Activated B cell treated with CpG ODN at 0.5 μM for 24 hours (primary cell): ENCODE measurements at regions of chr9 and their contacts with region 1.

Region 1: DNA sequence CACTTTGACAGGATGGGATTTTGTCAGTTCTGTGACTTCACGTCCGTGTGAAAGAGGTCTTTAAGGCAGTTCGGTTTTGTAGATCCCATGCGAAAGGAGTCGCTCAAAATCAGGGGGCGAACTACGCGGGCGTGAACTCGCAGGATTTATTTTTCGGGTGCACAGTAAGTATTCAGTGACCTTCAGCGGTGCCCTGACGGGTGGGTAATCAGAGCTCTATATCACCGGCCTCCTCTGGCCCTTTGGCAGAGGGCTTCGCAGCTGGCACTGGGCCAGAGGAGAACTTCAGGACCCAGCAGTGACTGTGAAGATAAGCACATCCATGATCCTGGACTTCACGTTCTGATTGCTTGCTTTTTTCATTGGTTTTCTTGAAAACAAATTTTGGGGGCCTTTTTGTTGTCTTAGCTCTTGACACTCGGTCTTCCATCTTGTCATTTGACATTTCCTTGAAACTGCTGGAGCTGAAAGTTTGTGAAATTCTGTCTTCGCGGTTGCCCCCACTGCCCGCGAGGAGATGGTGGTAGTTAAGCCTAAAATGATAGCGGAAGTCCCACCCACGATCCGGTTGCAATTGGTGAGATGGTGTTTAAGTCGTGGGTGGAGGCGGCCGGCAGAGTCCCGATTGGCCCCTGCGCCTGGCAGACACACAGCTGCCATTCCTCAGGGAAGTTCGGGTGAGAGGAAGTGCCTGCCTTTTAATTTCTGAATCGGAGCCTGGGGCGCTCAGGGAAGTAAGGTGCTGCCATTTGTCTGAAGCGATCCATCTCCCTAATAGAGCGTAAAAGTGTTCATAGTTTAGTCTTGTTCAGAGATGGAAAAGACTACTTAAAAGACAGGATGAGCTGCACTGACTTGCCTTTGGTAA is at the start of gene FAM120AOS:
- DNase-seq: peak; percentile 68
- ATAC-seq: peak; percentile 74
- H3K4me3 Mint-ChIP-seq: peak within 1 kb of the TSS; percentile 96
- H3K27ac Mint-ChIP-seq: peak within 1 kb of the TSS; percentile 97
- H3K4me1 Mint-ChIP-seq: peaks cover 56% of the 10 kb centered on the region
- H3K27me3 Mint-ChIP-seq: no peaks in the 10 kb centered on the region
- CTCF ChIP-seq: no peak
- total RNA-seq, gene FAM120AOS: 35.8 and 39.0 TPM in 2 replicates

Region 2: GRCh38 chr9:92963831-92964626 is 489.3 kb before region 1 on chr9:
- CTCF ChIA-PET with region 1: no interaction called
- POLR2A ChIA-PET with region 1: interaction called, 5 read pairs
- intact Hi-C with region 1: loop called (anchors 2 kb)
- DNase-seq: peak; percentile 56
- ATAC-seq: peak; percentile 82
- H3K4me3 Mint-ChIP-seq: peak overlapping the region; percentile 94
- H3K27ac Mint-ChIP-seq: peak overlapping the region; percentile 99
- H3K4me1 Mint-ChIP-seq: peaks cover 69% of the 10 kb centered on the region
- H3K27me3 Mint-ChIP-seq: no peaks in the 10 kb centered on the region
- CTCF ChIP-seq: no peak

Region 3: DNA sequence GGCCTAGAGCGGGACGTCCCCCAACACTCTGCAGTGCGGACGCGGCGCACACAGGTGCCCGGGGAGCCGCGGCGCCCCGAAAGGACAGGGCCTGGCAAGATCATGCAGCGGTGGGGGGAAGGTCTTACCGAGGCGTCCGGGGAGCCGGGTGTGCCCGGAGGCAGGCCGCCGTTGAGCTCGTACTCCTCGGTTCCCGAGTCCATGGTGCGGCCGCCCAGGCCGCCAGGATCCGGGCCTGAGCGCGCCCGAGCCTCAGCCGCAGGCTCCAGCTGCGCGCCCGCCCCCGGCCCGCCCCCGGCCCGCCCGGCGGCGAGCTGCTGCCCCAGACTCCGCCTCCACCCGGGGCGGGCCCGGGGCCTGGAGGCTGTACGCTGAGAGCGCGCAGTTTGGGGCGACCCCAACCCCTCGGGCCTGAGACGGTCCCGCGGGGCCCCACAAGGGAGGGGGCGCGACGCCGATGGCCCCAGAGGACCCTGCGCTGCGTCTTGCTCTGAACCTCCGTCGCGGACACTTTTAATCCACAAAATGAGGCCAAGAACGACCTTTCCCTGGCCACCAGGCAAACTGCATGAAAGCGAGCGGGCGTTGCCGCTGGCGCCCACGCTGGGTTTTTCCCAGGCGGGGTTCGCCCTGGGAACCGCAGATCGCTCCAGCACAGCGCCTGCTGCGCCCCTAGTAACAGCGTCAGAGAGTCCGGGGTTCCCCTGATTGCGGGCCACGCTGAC is 319.1 kb before region 1 on chr9 and contains the start of gene NINJ1:
- CTCF ChIA-PET with region 1: no interaction called
- POLR2A ChIA-PET with region 1: interaction called, 4 read pairs
- intact Hi-C with region 1: loop called (anchors 10 kb)
- DNase-seq: peak; percentile 75
- ATAC-seq: peak; percentile 85
- H3K4me3 Mint-ChIP-seq: peak within 1 kb of the TSS; percentile 85
- H3K27ac Mint-ChIP-seq: peak within 1 kb of the TSS; percentile 80
- H3K4me1 Mint-ChIP-seq: peaks cover 48% of the 10 kb centered on the region
- H3K27me3 Mint-ChIP-seq: no peaks in the 10 kb centered on the region
- CTCF ChIP-seq: no peak
- total RNA-seq, gene NINJ1: 10.2 and 11.0 TPM in 2 replicates

Region 4: GRCh38 chr9:93276968-93277367 is 176.3 kb before region 1 on chr9:
- CTCF ChIA-PET with region 1: no interaction called
- POLR2A ChIA-PET with region 1: no interaction called
- intact Hi-C with region 1: no loop called
- DNase-seq: no peak
- ATAC-seq: peak; percentile 47
- H3K4me3 Mint-ChIP-seq: no peak overlapping the region
- H3K27ac Mint-ChIP-seq: no peak overlapping the region
- H3K4me1 Mint-ChIP-seq: peaks cover 19% of the 10 kb centered on the region
- H3K27me3 Mint-ChIP-seq: peaks cover 61% of the 10 kb centered on the region
- CTCF ChIP-seq: no peak

Region 5: DNA sequence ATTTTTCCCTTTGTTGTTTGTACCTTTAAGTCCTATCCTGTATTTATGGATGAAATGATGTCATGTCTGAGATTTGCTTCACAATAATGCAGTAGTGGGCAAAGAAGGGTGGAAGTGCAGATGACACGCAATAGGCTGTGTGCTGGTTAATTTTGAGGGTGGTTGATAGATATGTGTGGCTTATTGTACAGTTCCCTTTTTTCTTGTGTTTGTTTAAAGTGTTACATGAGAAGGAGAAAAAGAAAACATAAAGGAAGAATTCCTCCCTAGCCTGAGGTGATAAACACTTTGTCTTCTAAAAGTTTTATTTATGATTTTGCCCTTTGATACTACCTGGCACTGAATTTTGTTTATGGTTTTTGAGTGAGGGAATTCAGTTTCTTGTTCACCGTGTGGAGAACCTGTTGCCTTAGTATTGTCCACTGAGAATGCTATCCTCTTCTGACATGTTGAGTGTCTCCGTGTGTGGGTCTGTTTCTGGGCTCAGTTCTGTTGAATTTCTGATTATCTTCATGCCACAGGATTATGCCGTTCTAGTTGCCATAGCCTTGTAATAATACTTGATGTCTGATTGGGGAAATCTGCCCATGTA is 52.4 kb after region 1 on chr9:
- CTCF ChIA-PET with region 1: interaction called, 3 read pairs
- POLR2A ChIA-PET with region 1: no interaction called
- intact Hi-C with region 1: loop called (anchors 2 kb)
- DNase-seq: no peak
- ATAC-seq: no peak
- H3K4me3 Mint-ChIP-seq: peak overlapping the region; percentile 9
- H3K27ac Mint-ChIP-seq: peak overlapping the region; percentile 71
- H3K4me1 Mint-ChIP-seq: peaks cover 67% of the 10 kb centered on the region
- H3K27me3 Mint-ChIP-seq: no peaks in the 10 kb centered on the region
- CTCF ChIP-seq: no peak

Region 6: GRCh38 chr9:94166237-94166963 is 713.1 kb after region 1 on chr9:
- CTCF ChIA-PET with region 1: no interaction called
- POLR2A ChIA-PET with region 1: no interaction called
- intact Hi-C with region 1: loop called (anchors 1 kb)
- DNase-seq: peak; percentile 85
- ATAC-seq: peak; percentile 63
- H3K4me3 Mint-ChIP-seq: peak overlapping the region; percentile 89
- H3K27ac Mint-ChIP-seq: peak overlapping the region; percentile 87
- H3K4me1 Mint-ChIP-seq: peaks cover 49% of the 10 kb centered on the region
- H3K27me3 Mint-ChIP-seq: no peaks in the 10 kb centered on the region
- CTCF ChIP-seq: no peak